Gastrocnemius medialis (tissue), 4 donors: ENCODE measurements at regions of chr17 and their contacts with region 1.

Region 1: GRCh38 chr17:78988152-78988551 is 8.4 kb upstream of the LGALS3BP start:
- DNase-seq: no peak
- ATAC-seq: no peak
- H3K4me3 ChIP-seq: no peak overlapping the region
- H3K27ac ChIP-seq: peak overlapping the region in 1 of 4 donors; percentile 5
- H3K4me1 ChIP-seq: peaks cover 4 to 22% of the 10 kb centered on the region in 2 donors
- H3K27me3 ChIP-seq: no peaks in the 10 kb centered on the region
- CTCF ChIP-seq: no peak
- POLR2A ChIP-seq: no peak

Region 2: DNA sequence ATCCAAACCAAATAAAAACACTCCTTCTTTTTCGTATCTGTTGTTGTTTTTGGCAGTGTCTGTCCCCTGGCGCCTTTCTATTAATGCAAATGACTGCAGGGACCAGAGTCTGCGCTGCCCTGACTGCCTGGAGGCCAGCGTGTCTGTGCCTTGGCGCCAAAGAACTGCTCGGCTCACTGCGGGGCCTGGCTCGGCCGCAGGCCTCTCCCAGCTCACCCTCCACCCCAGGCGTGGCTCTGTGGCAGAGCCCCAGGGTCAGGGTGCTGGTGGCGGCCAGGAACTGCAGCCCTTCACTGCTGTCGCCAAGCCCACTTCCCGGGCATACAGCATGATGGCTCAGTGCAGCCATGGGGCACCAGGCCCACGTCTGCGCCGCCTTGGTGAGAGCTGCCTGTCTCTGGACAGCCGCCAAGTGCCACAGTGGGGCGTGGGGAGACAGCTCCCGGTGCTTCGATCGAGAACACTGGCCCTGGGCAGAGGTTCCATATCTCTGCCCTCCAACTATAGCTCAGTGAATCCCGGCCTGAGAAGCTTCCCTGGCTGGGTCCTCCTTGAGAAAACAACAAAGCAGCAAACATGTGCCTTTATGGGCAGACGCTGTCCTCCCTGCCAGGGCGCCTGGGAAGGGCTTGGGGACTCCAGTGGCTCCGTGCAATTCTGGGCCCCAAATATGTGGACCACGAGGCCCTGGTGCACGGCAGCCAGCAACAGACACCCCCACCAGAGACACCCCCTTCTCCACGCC is 10.3 kb after region 1 on chr17:
- in situ Hi-C with region 1: no loop called
- intact Hi-C with region 1: loop called (anchors 1 kb)
- DNase-seq: peak in 1 of 2 donors; percentile 32
- ATAC-seq: peak in 1 of 2 donors; percentile 16
- H3K4me3 ChIP-seq: no peak overlapping the region
- H3K27ac ChIP-seq: peak overlapping the region in 3 of 4 donors; percentile 20 to 39 (median 26)
- H3K4me1 ChIP-seq: peaks cover 14 to 15% of the 10 kb centered on the region in 2 donors
- H3K27me3 ChIP-seq: no peaks in the 10 kb centered on the region
- CTCF ChIP-seq: no peak
- POLR2A ChIP-seq: no peak